Activated CD4-positive, alpha-beta T cell treated with anti-CD3 and anti-CD28 coated beads for 36 hours (primary cell): ENCODE measurements at regions of chr5 and their contacts with region 1.

Region 1: GRCh38 chr5:35058374-35058788 is 10.6 kb upstream of the AGXT2 start:
- DNase-seq: peak; percentile 5
- ATAC-seq: peak; percentile 87
- H3K4me3 Mint-ChIP-seq: no peak overlapping the region
- H3K27ac Mint-ChIP-seq: no peak overlapping the region
- H3K4me1 Mint-ChIP-seq: peaks cover 9% of the 10 kb centered on the region
- H3K27me3 Mint-ChIP-seq: peaks cover 39% of the 10 kb centered on the region

Region 2: DNA sequence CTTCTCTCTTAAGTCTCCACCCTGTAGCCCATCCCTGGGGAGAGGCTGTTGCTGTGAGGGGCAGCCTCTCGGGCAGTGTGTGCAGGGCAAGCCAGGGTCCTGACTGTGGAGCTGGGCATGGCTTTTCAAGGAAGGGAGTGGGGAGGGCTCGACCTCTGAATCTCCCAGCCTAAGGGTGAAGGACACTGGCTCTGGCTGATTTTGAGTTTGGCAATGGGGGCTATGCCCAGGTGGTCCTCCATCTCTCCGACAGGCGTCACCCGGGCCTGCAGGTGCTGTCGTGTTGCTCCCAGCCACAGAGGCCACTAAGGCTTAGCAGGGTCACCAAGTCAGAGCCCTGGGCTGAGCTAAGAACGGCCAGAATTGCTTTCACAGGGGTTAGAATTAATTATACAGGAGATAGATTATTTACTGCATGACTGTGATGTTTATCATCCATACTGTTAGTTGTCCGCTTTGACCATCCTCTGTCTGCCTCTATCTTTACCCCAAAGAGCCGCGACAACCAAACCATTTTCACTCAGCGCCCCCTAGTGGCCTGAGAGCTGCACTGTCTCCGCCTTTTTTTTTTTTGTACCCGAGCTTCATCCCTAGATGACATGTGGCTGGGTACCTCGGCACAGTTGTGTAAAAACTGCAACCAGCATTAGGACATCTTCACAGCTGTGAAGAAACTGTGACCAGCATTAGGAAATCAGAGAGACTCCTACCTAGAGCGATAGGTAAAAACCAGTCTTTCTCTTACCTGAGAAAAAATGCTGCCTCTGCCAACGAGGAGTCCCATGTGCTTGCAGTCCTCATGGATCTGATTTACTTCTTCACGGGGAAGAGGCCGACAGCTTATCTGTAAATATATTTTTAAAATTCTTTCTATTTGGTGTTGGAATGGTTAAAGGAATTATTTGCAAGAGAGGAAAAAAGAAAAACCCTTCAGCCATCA is 55.1 kb before region 1 on chr5:
- CTCF ChIA-PET with region 1: no interaction called
- POLR2A ChIA-PET with region 1: no interaction called
- intact Hi-C with region 1: no loop called
- DNase-seq: peak; percentile 79
- ATAC-seq: peak; percentile 72
- H3K4me3 Mint-ChIP-seq: no peak overlapping the region
- H3K27ac Mint-ChIP-seq: no peak overlapping the region
- H3K4me1 Mint-ChIP-seq: no peaks in the 10 kb centered on the region
- H3K27me3 Mint-ChIP-seq: peaks cover 20% of the 10 kb centered on the region

Region 3: DNA sequence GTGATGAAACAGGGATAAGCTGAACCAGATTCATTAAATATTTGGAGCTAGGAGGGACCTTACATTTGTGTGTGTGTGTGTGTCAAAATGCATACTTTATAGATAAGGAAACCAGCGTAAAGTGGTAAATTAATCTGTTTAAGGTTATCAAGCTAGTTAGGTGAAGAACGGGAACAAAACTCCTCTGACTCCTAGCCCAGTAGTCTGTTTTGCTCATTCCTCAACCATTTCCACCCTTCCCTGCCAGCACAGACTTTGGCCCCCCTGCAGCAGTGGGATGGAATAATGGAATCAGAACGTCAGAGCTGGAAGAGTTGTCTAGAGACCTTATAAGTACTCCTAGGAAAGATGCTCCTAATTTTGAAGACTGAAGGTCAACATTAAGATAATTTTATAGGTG is 17.1 kb before region 1 on chr5:
- CTCF ChIA-PET with region 1: no interaction called
- POLR2A ChIA-PET with region 1: no interaction called
- intact Hi-C with region 1: no loop called
- DNase-seq: no peak
- ATAC-seq: no peak
- H3K4me3 Mint-ChIP-seq: no peak overlapping the region
- H3K27ac Mint-ChIP-seq: no peak overlapping the region
- H3K4me1 Mint-ChIP-seq: no peaks in the 10 kb centered on the region
- H3K27me3 Mint-ChIP-seq: peaks cover 34% of the 10 kb centered on the region

Region 4: DNA sequence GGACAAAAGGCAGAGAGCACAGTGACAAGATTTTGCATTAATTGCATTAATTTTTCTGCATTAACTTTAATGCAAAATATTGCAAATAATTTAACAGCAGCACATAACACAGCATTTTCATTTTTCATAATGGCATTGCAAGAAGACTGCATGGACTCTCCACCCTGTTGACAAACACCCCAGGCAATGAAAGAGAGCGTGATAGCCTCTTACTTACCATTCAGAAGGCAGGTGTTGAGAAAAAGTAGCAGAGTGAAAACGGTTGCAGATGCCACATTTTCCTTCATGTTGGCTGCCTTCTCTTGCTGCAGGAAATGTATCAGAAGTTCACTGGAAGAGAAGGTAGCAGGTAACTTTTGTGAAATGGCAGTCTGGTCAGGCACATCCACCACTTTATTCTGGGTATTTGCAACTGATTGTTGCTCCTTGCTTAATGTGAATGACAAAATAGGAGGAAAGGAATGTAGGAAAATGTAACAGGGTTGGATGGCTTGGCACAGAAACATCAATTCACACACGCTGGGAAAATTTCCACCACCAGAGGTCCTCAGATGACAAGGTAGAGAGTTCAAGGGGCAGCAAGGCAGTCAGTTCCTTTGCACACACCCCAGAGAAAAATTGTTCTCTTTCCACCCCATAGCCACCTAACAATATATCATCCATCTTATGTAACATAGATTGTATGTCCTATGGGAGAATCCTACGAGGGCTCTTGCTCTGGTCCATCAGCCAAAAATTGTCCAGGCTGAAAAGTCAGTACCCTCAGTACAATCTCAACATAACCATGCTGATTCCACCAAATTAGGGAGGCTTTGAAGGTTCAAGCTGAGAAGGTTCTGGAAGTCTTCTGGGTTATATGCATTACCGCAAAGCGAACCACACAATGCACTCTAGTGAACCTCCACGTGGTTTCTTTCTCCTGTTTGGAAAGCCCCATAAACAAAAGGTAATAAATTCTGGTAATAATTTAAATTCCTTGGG is 31.2 kb after region 1 on chr5:
- CTCF ChIA-PET with region 1: no interaction called
- POLR2A ChIA-PET with region 1: no interaction called
- intact Hi-C with region 1: no loop called
- DNase-seq: peak; percentile 73
- ATAC-seq: no peak
- H3K4me3 Mint-ChIP-seq: no peak overlapping the region
- H3K27ac Mint-ChIP-seq: no peak overlapping the region
- H3K4me1 Mint-ChIP-seq: peaks cover 3% of the 10 kb centered on the region
- H3K27me3 Mint-ChIP-seq: peaks cover 10% of the 10 kb centered on the region

Region 5: GRCh38 chr5:35319333-35320002 is 261.1 kb after region 1 on chr5:
- CTCF ChIA-PET with region 1: no interaction called
- POLR2A ChIA-PET with region 1: no interaction called
- intact Hi-C with region 1: loop called in 1 of 2 experiments (anchors 2 kb)
- DNase-seq: peak; percentile 92
- ATAC-seq: peak; percentile 91
- H3K4me3 Mint-ChIP-seq: no peak overlapping the region
- H3K27ac Mint-ChIP-seq: no peak overlapping the region
- H3K4me1 Mint-ChIP-seq: peaks cover 30% of the 10 kb centered on the region
- H3K27me3 Mint-ChIP-seq: peaks cover 14% of the 10 kb centered on the region